KBM-7 (cell line): ENCODE measurements at regions of chr17 and their contacts with region 1.

Region 1: GRCh38 chr17:44919885-44920564 is 4.7 kb upstream of the GFAP start:
- DNase-seq: peak; percentile 73

Region 2: GRCh38 chr17:44779211-44780025 is 140.6 kb before region 1 on chr17:
- in situ Hi-C with region 1: no loop called
- DNase-seq: peak; percentile 85

Region 3: DNA sequence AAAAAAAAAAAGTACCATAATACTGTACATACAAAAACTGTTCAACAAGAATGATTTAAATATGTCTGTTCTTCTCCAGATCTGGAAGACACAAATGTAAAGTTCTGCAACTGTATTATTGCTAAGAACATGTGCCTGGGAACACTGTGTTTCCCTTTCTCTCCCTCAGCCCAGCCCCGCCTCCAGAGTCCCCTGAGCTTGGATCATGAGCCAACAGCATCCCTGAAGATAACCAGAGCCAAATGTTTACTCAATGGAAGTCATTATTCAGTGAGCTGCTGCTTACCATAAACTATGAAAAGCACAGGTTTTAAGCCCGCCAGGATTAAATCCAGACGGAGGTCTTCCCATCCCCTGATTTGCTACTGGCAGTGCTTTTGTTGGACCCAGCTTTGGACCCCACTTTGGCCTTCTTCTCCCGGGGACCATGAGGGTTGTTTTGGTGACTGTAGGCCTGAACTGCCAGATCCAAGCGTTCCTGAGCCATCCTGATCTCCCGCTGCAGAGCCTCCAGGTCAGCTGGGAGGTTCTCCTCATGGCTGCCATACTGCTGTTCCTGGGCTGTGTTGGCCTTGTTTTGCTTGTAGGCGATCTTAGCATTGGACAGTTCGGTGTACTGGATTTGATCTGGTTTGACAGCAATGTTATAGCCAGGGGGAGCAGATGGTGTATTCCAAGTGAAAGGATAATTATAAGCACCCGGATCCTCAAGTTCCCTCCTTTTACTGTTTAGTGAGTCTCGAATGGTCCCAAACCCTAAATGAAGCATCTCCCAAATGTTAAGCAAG is 115.5 kb before region 1 on chr17:
- in situ Hi-C with region 1: no loop called
- DNase-seq: no peak

Region 4: GRCh38 chr17:45021607-45022287 is 101.7 kb after region 1 on chr17:
- in situ Hi-C with region 1: loop called (anchors 25 kb)
- DNase-seq: peak; percentile 55

Region 5: DNA sequence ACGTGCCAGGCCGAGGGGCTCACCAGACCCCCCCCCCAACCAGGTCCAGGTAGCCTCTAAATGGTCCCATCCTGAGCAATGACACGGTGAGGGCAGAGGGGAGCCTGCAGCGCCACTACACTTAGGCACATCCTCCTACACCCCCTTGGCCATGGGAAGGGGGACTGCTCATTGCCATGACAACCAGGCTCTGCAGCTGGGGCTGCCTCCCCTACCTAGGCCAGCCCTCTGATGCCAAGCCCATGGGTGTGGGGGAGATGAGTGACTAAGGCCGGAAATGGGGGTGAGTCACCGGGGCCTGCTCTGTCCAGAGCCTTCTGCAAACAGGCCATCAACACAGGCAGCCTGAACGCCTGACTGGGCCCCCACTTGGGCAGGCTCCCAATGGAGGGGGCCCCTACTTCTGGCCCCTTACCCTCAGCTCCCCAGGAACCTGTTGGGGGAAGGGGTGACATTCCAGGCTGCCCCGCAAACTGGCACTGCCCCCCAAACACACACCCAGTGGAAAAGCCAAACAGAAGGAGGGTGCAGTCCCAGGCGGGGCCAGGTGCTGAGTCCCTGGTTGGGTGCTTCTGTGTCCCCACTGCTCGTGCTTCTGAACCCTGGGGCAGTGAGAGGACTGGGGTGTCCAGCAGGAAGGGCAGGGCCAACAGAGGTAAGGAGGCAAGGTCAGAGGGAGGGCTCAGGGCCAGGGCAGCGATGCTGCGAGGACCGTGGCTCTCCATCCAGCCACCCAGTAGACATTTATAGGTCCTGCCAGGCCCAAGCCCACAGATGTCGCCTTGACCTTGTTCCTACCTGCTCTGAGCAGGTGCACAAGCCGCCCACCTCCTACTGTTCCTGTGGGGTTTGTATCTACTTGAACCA is 204.1 kb after region 1 on chr17:
- in situ Hi-C with region 1: loop called (anchors 25 kb)
- DNase-seq: peak; percentile 85